ENCODE measurements at regions of chr3 and their contacts with region 1.

Region 1: GRCh38 chr3:132268956-132269355 is 48.3 kb upstream of the ACP3 start:
- DNase-seq: no peak
- H3K4me3 ChIP-seq: no peak overlapping the region
- H3K27me3 ChIP-seq: no peaks in the 10 kb centered on the region
- CTCF ChIP-seq: peak; percentile 59

Region 2: GRCh38 chr3:132057909-132058308 is 211.0 kb before region 1 on chr3:
- CTCF ChIA-PET with region 1: no interaction called
- POLR2A ChIA-PET with region 1: no interaction called
- DNase-seq: no peak
- H3K4me3 ChIP-seq: no peak overlapping the region
- H3K27me3 ChIP-seq: no peaks in the 10 kb centered on the region
- CTCF ChIP-seq: no peak

Region 3: DNA sequence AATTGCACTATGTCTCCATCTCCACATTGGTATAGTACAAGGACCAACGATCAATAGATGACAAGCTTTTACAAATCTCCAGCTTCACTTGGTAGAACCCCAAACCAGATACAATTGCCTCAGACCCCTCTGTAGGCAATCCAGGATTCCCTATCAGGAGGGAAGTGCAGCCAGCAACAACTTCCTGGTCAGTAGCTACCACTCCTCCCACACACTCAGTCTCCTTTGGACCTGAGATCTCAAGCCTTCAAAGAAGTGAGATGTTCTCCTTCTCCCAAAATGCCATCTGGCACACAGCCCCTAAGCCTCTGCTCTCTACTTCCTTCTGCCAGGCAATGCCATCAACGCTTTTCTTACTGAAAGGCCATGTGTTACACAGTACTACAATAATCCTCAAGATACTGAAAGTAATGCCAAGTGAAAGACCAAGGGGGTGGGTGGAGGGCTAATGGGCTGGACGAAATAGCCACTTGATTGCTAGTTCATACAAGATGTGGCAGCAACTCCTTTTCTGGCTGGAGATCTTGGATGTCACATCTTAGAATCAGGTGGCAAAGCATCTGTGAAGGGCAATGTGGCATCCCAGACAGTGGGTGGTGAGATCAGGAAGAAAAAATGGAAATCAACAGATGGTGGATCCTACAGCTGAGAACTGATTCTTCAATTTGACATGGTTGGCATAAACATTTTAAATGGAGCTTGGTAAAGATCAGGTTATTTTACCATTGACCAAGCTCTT is 27.0 kb before region 1 on chr3:
- CTCF ChIA-PET with region 1: no interaction called
- POLR2A ChIA-PET with region 1: no interaction called
- DNase-seq: no peak
- H3K4me3 ChIP-seq: no peak overlapping the region
- H3K27me3 ChIP-seq: peaks cover 1% of the 10 kb centered on the region; the same call in 1 of the 2 replicates
- CTCF ChIP-seq: no peak

Region 4: DNA sequence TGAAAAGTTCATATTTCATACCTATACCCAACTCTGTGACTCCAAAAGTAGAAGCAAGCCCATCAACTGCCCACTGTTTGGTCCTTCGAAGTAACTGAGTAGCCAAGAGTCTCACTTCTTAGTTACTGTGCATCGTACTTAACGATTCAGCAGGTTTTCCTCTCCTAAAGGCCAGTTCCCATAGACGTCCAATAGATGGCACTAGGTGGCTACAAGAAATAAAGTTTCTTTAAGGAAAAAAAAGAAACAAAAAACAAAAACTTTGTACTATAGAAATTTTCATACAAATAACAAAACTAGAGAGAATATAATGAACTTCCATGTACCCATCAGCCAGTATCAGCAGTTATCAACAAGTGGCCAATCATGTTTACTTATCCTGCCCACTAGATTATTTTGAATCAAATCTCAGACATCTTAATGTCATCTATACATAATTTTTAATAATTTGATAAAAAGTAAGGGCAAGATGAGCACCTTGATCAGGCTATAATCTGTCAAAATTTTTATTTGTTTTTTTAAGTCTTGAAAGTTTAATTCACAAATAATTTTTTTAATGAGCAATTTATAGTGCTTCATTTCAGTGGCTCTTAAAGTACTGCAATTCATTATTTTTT is 15.6 kb before region 1 on chr3:
- CTCF ChIA-PET with region 1: interaction called, 67 read pairs
- POLR2A ChIA-PET with region 1: no interaction called
- DNase-seq: no peak
- H3K4me3 ChIP-seq: no peak overlapping the region
- H3K27me3 ChIP-seq: no peaks in the 10 kb centered on the region
- CTCF ChIP-seq: peak; percentile 87

Region 5: GRCh38 chr3:132283440-132283839 is 14.5 kb after region 1 on chr3:
- CTCF ChIA-PET with region 1: interaction called, 19 read pairs
- POLR2A ChIA-PET with region 1: no interaction called
- DNase-seq: no peak
- H3K4me3 ChIP-seq: no peak overlapping the region
- H3K27me3 ChIP-seq: no peaks in the 10 kb centered on the region
- CTCF ChIP-seq: no peak

Region 6: GRCh38 chr3:132290833-132291232 is 21.9 kb after region 1 on chr3:
- CTCF ChIA-PET with region 1: interaction called, 19 read pairs
- POLR2A ChIA-PET with region 1: no interaction called
- DNase-seq: peak; percentile 35
- H3K4me3 ChIP-seq: no peak overlapping the region
- H3K27me3 ChIP-seq: no peaks in the 10 kb centered on the region
- CTCF ChIP-seq: no peak

Region 7: GRCh38 chr3:132343018-132343612 is 74.2 kb after region 1 on chr3:
- CTCF ChIA-PET with region 1: interaction called, 15 read pairs
- POLR2A ChIA-PET with region 1: no interaction called
- DNase-seq: peak; percentile 4
- H3K4me3 ChIP-seq: no peak overlapping the region
- H3K27me3 ChIP-seq: no peaks in the 10 kb centered on the region
- CTCF ChIP-seq: peak; percentile 80